A549 (cell line): ENCODE measurements at regions of chr2 and their contacts with region 1.

Region 1: DNA sequence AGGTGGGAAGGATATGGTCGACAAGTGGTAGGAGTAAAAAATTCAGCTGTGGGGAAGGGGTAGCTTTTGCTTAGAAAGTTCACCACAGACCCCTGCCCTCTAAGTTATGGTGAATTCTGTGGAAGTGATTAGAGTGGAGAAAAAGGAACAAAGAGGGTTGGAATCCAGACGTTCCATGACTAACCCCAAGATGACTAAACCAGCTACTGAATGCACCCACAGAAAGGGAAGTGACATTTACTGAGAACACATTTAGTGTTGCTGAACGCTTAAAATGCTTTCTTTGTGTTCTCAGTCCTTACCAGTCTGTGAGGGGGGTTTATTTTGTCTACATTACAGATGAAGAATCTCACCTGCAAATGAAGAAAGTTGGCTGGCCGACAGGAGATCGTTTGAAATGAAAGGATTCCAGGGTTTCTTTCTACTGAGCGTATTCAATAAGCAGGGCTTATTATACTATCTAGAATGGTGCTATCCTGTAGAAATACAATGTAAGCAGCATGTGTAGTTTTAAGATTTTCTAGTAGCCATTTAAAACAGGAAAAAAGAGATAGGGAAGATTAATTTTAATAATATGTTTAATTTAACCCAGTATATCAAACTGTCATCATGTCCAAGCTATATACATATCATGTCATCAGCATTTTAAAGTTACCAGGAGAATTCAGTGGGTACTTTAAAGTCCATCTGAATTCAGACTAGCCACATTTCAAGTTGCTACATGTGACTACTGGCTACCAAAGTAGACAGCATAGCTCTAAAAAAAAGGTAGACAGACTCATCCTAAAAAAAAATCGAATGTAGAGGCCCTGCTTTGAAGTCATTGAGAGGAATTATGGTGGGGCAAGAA is 60.1 kb downstream of the LIMS1 start:
- DNase-seq: peak in 1 of 2 experiments; percentile 76
- ATAC-seq: peak; percentile 80 to 81
- H3K4me3 ChIP-seq: 0 out of 3 replicates have a peak overlapping the region, but pooled peaks have one; percentile 5
- H3K27ac ChIP-seq: peak overlapping the region; percentile 85 to 86
- H3K4me1 ChIP-seq: peaks cover 58% of the 10 kb centered on the region
- CTCF ChIP-seq: no peak
- EP300 ChIP-seq: peak; percentile 29 to 39; a peak in 1 of 5 replicates
- POLR2A ChIP-seq: no peak
- RAD21 ChIP-seq: 0 out of 5 replicates have a peak, but pooled peaks of 1 of the 2 experiments have one; percentile 9

Region 2: GRCh38 chr2:107281637-107282036 is 1312.7 kb before region 1 on chr2:
- CTCF ChIA-PET with region 1: no interaction called
- POLR2A ChIA-PET with region 1: no interaction called
- DNase-seq: no peak
- ATAC-seq: no peak
- H3K4me3 ChIP-seq: no peak overlapping the region
- H3K27ac ChIP-seq: no peak overlapping the region
- H3K4me1 ChIP-seq: no peaks in the 10 kb centered on the region
- CTCF ChIP-seq: no peak
- EP300 ChIP-seq: no peak
- POLR2A ChIP-seq: no peak
- RAD21 ChIP-seq: no peak

Region 3: GRCh38 chr2:108403494-108403893 is 190.9 kb before region 1 on chr2:
- CTCF ChIA-PET with region 1: no interaction called
- POLR2A ChIA-PET with region 1: no interaction called
- DNase-seq: peak in 1 of 2 experiments; percentile 48
- ATAC-seq: peak in 1 of 2 experiments; percentile 68; a peak in 2 of 6 replicates
- H3K4me3 ChIP-seq: no peak overlapping the region
- H3K27ac ChIP-seq: peak overlapping the region; percentile 45 to 65; a peak in 4 of 6 replicates
- H3K4me1 ChIP-seq: peaks cover 12% of the 10 kb centered on the region; the same call in 2 of the 3 replicates
- CTCF ChIP-seq: no peak
- EP300 ChIP-seq: peak; percentile 16 to 17; a peak in 1 of 5 replicates
- POLR2A ChIP-seq: no peak
- RAD21 ChIP-seq: no peak

Region 4: DNA sequence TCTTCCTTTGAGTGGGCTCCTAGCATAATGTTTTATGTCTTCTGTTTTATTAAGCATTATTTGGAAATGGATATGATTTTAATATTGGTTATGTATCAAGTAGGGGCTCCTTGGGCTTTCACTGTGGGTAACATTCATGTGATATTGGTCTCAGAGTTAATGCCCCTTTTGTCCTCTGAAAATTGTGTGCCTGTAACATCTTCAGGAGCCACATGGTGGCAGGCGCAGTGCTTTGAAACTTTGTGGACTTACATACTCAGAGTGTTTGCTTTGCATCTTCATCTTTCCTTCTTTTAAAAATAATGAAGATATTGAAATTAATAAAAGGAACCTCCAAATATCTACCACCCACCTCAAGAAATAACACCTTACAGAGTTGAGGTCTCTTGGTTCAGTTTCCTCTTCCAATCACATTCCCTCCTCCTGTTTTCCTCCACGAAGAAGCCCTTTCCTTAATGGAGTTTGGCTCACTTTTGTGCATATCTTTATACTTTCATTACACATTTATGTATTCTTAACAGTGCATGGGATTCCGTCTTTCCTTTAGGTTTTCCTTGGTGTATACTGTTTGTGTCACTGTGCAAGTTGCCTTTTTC is 13.4 kb after region 1 on chr2:
- CTCF ChIA-PET with region 1: interaction called, 12 read pairs
- POLR2A ChIA-PET with region 1: interaction called, 3 read pairs
- DNase-seq: peak in 1 of 2 experiments; percentile 47
- ATAC-seq: peak; percentile 83 to 85
- H3K4me3 ChIP-seq: no peak overlapping the region
- H3K27ac ChIP-seq: no peak overlapping the region
- H3K4me1 ChIP-seq: no peaks in the 10 kb centered on the region; the same call in 2 of the 3 replicates
- CTCF ChIP-seq: peak; percentile 55
- EP300 ChIP-seq: no peak
- POLR2A ChIP-seq: no peak
- RAD21 ChIP-seq: peak; percentile 56 to 58